H1 (cell line): ENCODE measurements at regions of chr12 and their contacts with region 1.

Region 1: DNA sequence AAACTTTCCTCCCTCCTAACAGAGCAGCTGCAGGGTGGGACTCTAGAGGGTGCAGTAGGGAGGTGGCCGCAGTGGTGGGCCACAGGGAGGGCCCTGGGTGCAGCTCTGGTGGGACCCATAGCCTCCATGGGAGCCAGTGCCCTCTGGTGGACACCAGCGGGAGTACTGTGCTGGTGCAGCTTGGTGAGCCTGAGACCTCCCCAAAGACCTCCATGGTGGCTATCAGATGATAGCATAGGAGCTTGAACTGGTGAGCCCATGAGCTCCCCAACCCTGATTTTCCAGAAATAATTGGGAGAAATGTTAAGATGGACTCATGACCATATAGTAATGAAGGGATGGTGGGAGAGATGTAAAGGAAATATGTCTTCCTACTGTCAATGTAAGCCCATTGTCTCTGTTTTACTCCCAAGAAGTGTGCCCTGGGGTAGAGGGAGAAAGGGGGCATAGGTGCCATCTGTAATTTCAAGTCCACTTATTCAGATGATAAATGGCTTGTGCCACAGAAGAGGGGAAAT is 98.7 kb downstream of the GAS2L3 start:
- DNase-seq: peak in 1 of 2 experiments; percentile 94
- H3K4me3 ChIP-seq: no peak overlapping the region
- H3K27ac ChIP-seq: no peak overlapping the region
- H3K4me1 ChIP-seq: no peaks in the 10 kb centered on the region
- H3K27me3 ChIP-seq: no peaks in the 10 kb centered on the region
- CTCF ChIP-seq: peak; percentile 70 to 90 (median 85)
- EP300 ChIP-seq: no peak
- POLR2A ChIP-seq: no peak
- RAD21 ChIP-seq: peak; percentile 57 to 63

Region 2: DNA sequence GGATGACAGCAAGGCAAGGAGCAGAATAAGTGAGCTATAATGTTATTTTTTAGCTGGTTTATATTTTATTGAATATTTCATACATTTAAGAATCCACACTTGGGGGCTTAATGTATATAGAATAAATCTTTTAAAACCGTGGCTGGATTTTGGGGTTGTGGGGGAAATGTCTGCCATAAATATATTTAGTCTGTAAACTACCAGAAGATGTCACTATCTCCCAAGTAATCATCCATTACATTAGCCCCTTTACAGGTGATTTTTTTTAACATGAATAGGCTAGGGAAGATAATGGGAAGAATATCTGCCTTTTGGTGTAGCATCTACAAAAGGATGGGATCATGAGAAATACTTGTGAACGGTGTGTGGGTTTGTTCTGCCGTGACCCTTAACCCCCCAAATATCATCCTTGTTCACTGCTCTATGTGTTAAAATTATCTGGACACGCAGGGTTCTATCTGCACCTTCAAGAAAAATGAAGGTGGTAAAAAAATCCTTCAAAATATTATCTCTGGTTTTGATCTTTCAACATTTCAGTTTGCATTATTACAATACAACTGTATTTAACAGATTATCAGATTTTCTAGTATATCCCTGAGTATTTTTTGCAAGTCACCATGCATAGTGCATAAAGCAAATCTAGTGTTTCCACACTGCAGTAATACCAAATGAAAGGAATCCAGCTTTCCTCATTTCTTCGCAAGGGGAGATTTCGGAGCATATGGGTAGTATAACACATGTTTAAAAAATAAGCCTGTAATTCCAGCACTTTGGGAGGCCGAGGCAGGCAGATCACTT is 323.3 kb before region 1 on chr12:
- CTCF ChIA-PET with region 1: interaction called, 34 read pairs
- POLR2A ChIA-PET with region 1: no interaction called
- DNase-seq: no peak
- H3K4me3 ChIP-seq: no peak overlapping the region
- H3K27ac ChIP-seq: no peak overlapping the region
- H3K4me1 ChIP-seq: no peaks in the 10 kb centered on the region
- H3K27me3 ChIP-seq: no peaks in the 10 kb centered on the region
- CTCF ChIP-seq: peak in 2 of 3 experiments; percentile 36 to 51; a peak in 2 of 4 replicates
- EP300 ChIP-seq: no peak
- POLR2A ChIP-seq: no peak
- RAD21 ChIP-seq: peak; percentile 83 to 89

Region 3: DNA sequence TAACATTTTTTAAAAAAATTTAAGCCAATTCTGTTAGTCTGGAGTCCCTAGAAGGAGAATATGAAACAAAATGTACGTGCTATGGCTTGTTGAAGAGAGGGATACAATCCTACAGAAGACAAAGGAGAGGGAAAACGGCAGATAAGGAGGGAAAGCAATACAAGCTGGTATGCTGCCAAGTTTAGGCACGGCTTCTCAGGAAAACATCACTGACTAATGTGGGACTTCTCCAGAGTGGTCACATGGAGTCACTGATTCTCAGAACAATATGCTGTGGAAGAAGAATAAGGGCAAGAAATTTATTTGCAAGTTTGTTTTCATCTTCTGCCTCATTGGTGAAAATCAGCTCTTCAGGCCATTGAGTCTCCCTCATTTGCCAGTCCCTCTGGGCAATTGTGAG is 221.4 kb before region 1 on chr12:
- CTCF ChIA-PET with region 1: no interaction called
- POLR2A ChIA-PET with region 1: no interaction called
- DNase-seq: no peak
- H3K4me3 ChIP-seq: no peak overlapping the region
- H3K27ac ChIP-seq: no peak overlapping the region
- H3K4me1 ChIP-seq: peaks cover 0 to 6% (median 0%) of the 10 kb centered on the region in 4 experiments; a peak in 2 of 7 replicates
- H3K27me3 ChIP-seq: no peaks in the 10 kb centered on the region
- CTCF ChIP-seq: no peak
- EP300 ChIP-seq: no peak
- POLR2A ChIP-seq: no peak
- RAD21 ChIP-seq: no peak

Region 4: GRCh38 chr12:100651108-100651507 is 21.0 kb before region 1 on chr12:
- CTCF ChIA-PET with region 1: interaction called, 101 read pairs
- POLR2A ChIA-PET with region 1: no interaction called
- DNase-seq: no peak
- H3K4me3 ChIP-seq: no peak overlapping the region
- H3K27ac ChIP-seq: no peak overlapping the region
- H3K4me1 ChIP-seq: no peaks in the 10 kb centered on the region
- H3K27me3 ChIP-seq: no peaks in the 10 kb centered on the region
- CTCF ChIP-seq: peak in 2 of 3 experiments; percentile 25 to 51; a peak in 3 of 4 replicates
- EP300 ChIP-seq: no peak
- POLR2A ChIP-seq: no peak
- RAD21 ChIP-seq: peak in 1 of 2 experiments; percentile 10; a peak in 2 of 4 replicates

Region 5: DNA sequence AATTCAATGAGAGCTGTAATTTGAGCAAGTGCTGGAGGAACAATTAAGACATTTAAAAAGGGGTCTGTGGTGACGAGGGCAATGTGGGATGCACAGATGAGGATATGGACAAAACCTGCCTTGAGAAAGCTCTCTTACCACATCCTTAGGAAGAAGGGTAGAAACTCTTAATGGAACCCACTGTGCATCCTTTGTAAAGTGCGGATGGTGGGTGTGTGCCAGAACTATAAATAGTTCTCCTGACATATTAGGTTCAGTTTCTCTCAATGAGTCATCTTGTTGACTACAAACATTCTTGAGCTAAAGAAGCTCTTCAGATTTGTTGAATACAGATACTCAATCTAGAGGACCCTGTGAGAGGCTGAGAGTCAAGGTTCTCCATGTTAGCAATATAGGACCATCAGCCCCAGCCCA is 16.3 kb after region 1 on chr12:
- CTCF ChIA-PET with region 1: interaction called, 31 read pairs
- POLR2A ChIA-PET with region 1: no interaction called
- DNase-seq: no peak
- H3K4me3 ChIP-seq: no peak overlapping the region
- H3K27ac ChIP-seq: no peak overlapping the region
- H3K4me1 ChIP-seq: no peaks in the 10 kb centered on the region; a peak in 1 of 7 replicates
- H3K27me3 ChIP-seq: no peaks in the 10 kb centered on the region
- CTCF ChIP-seq: no peak
- EP300 ChIP-seq: no peak
- POLR2A ChIP-seq: no peak
- RAD21 ChIP-seq: no peak

Region 6: GRCh38 chr12:100706033-100706432 is 33.9 kb after region 1 on chr12:
- CTCF ChIA-PET with region 1: interaction called, 29 read pairs
- POLR2A ChIA-PET with region 1: no interaction called
- DNase-seq: no peak
- H3K4me3 ChIP-seq: no peak overlapping the region
- H3K27ac ChIP-seq: no peak overlapping the region
- H3K4me1 ChIP-seq: peaks cover 0 to 4% (median 0%) of the 10 kb centered on the region in 4 experiments; a peak in 2 of 7 replicates
- H3K27me3 ChIP-seq: no peaks in the 10 kb centered on the region
- CTCF ChIP-seq: no peak
- EP300 ChIP-seq: no peak
- POLR2A ChIP-seq: no peak
- RAD21 ChIP-seq: no peak

Region 7: GRCh38 chr12:100733817-100734593 is 61.9 kb after region 1 on chr12:
- CTCF ChIA-PET with region 1: interaction called, 68 read pairs
- POLR2A ChIA-PET with region 1: interaction called, 3 read pairs
- DNase-seq: no peak
- H3K4me3 ChIP-seq: no peak overlapping the region
- H3K27ac ChIP-seq: no peak overlapping the region
- H3K4me1 ChIP-seq: no peaks in the 10 kb centered on the region
- H3K27me3 ChIP-seq: no peaks in the 10 kb centered on the region
- CTCF ChIP-seq: peak in 2 of 3 experiments; percentile 46 to 50; a peak in 2 of 4 replicates
- EP300 ChIP-seq: no peak
- POLR2A ChIP-seq: no peak
- RAD21 ChIP-seq: peak; percentile 45 to 48